Testis (tissue), 5 donors: ENCODE measurements at regions of chr4 and their contacts with region 1.

Region 1: GRCh38 chr4:72954811-72955210 is 114.7 kb downstream of the COX18 start:
- DNase-seq: no peak
- H3K4me3 ChIP-seq: no peak overlapping the region
- H3K27ac ChIP-seq: no peak overlapping the region
- H3K4me1 ChIP-seq: no peaks in the 10 kb centered on the region
- H3K27me3 ChIP-seq: no peaks in the 10 kb centered on the region
- CTCF ChIP-seq: no peak
- POLR2A ChIP-seq: no peak

Region 2: GRCh38 chr4:74733756-74734155 is 1778.9 kb after region 1 on chr4:
- intact Hi-C with region 1: loop called (anchors 5 kb)
- DNase-seq: no peak
- H3K4me3 ChIP-seq: no peak overlapping the region
- H3K27ac ChIP-seq: no peak overlapping the region
- H3K4me1 ChIP-seq: no peaks in the 10 kb centered on the region
- H3K27me3 ChIP-seq: no peaks in the 10 kb centered on the region
- CTCF ChIP-seq: no peak
- POLR2A ChIP-seq: no peak